Activated B cell treated with CpG ODN at 0.5 μM for 24 hours (primary cell): ENCODE measurements at regions of chr19 and their contacts with region 1.

Region 1: GRCh38 chr19:14031719-14032480 is at the start of gene IL27RA:
- DNase-seq: peak; percentile 70
- ATAC-seq: peak; percentile 74
- H3K4me3 Mint-ChIP-seq: peak within 1 kb of the TSS; percentile 91
- H3K27ac Mint-ChIP-seq: peak within 1 kb of the TSS; percentile 89
- H3K4me1 Mint-ChIP-seq: peaks cover 34% of the 10 kb centered on the region
- H3K27me3 Mint-ChIP-seq: no peaks in the 10 kb centered on the region
- CTCF ChIP-seq: no peak
- total RNA-seq, gene IL27RA: 34.5 and 34.6 TPM in 2 replicates

Region 2: GRCh38 chr19:13905938-13906904 is 125.7 kb before region 1 on chr19 and contains the starts of genes BRME1 and CC2D1A:
- CTCF ChIA-PET with region 1: interaction called, 11 read pairs
- POLR2A ChIA-PET with region 1: interaction called, 11 read pairs
- intact Hi-C with region 1: loop called (anchors 1 kb)
- DNase-seq: peak; percentile 93
- ATAC-seq: peak; percentile 99
- H3K4me3 Mint-ChIP-seq: peak within 1 kb of the TSS; percentile 87
- H3K27ac Mint-ChIP-seq: peak within 1 kb of the TSS; percentile 78
- H3K4me1 Mint-ChIP-seq: peaks cover 11% of the 10 kb centered on the region
- H3K27me3 Mint-ChIP-seq: no peaks in the 10 kb centered on the region
- CTCF ChIP-seq: no peak
- total RNA-seq, gene BRME1: 1.2 and 2.0 TPM in 2 replicates
- total RNA-seq, gene CC2D1A: 32.4 and 35.6 TPM in 2 replicates

Region 3: DNA sequence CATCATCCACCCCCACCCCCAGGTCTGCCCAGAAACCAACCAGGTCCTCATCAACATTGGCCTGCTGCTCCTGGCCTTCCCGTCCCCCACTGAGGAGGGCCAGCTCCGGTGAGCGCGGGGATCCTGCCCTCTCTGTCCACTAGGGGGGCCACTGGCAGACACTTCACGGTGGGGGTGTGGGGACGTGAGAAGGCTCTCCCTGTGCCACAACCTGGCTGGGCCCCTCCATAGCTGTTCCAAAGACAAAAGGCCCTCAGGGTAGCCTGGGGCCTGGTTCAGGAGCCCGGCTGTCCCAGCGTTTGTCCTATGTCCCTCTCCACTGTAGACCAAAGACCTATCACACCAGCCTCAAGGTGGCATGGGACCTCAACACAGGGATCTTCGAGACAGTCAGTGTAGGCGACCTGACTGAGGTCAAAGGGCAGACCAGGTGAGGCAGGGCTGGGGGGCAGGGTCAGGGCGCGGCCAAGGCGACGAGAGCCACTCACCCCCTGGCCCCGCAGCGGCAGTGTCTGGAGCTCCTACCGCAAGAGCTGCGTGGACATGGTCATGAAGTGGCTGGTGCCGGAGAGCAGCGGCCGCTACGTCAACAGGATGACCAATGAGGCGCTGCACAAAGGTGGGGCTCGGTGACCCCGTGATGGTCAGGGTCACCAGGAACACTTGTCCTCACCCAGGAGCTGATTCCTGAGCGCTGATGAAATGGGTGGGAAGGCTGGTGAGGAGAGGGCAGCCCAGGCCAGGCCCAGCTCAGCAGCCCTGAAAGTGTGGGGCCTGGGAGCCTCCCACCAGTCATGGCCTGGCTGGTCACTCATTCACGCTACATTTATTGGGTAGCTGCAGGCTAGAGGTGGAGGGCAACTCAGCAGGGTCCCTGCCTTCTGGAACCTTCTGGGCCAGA is 71.7 kb before region 1 on chr19:
- CTCF ChIA-PET with region 1: interaction called, 8 read pairs
- POLR2A ChIA-PET with region 1: interaction called, 3 read pairs
- intact Hi-C with region 1: loop called (anchors 2 kb)
- DNase-seq: no peak
- ATAC-seq: peak; percentile 57
- H3K4me3 Mint-ChIP-seq: no peak overlapping the region
- H3K27ac Mint-ChIP-seq: no peak overlapping the region
- H3K4me1 Mint-ChIP-seq: no peaks in the 10 kb centered on the region
- H3K27me3 Mint-ChIP-seq: no peaks in the 10 kb centered on the region
- CTCF ChIP-seq: no peak

Region 4: DNA sequence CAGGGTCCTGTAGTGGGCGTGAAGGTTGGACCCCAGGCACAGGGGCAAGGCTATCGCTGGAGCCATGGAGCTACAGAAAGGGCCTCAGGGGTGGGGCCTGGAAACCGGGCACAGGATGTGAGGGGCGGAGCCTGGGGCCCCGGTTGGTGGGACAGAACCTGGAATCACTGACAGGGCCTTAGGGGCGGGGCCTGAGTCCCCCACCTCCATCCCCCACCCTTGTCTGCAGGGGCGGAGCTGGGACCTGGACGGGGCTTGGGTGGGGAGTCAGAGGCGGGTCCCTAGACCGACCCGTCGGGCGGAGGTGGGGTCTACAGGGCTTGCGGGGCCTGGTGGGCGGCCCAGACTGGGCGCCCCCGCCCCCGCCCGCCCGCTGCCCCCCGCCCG is 53.6 kb before region 1 on chr19:
- CTCF ChIA-PET with region 1: interaction called, 4 read pairs
- POLR2A ChIA-PET with region 1: interaction called, 22 read pairs
- intact Hi-C with region 1: no loop called
- DNase-seq: no peak
- ATAC-seq: peak; percentile 36
- H3K4me3 Mint-ChIP-seq: peak overlapping the region; percentile 50
- H3K27ac Mint-ChIP-seq: no peak overlapping the region
- H3K4me1 Mint-ChIP-seq: peaks cover 42% of the 10 kb centered on the region
- H3K27me3 Mint-ChIP-seq: no peaks in the 10 kb centered on the region
- CTCF ChIP-seq: no peak

Region 5: GRCh38 chr19:13986348-13986904 is 45.5 kb before region 1 on chr19:
- CTCF ChIA-PET with region 1: interaction called, 5 read pairs
- POLR2A ChIA-PET with region 1: interaction called, 52 read pairs
- intact Hi-C with region 1: loop called (anchors 1 kb)
- DNase-seq: peak; percentile 94
- ATAC-seq: peak; percentile 83
- H3K4me3 Mint-ChIP-seq: peak overlapping the region; percentile 60
- H3K27ac Mint-ChIP-seq: peak overlapping the region; percentile 97
- H3K4me1 Mint-ChIP-seq: peaks cover 78% of the 10 kb centered on the region
- H3K27me3 Mint-ChIP-seq: no peaks in the 10 kb centered on the region
- CTCF ChIP-seq: no peak

Region 6: GRCh38 chr19:14015524-14016035 is 16.3 kb before region 1 on chr19:
- CTCF ChIA-PET with region 1: interaction called, 3 read pairs
- POLR2A ChIA-PET with region 1: interaction called, 33 read pairs
- intact Hi-C with region 1: loop called (anchors 2 kb)
- DNase-seq: no peak
- ATAC-seq: peak; percentile 76
- H3K4me3 Mint-ChIP-seq: peak overlapping the region; percentile 46
- H3K27ac Mint-ChIP-seq: peak overlapping the region; percentile 79
- H3K4me1 Mint-ChIP-seq: peaks cover 42% of the 10 kb centered on the region
- H3K27me3 Mint-ChIP-seq: no peaks in the 10 kb centered on the region
- CTCF ChIP-seq: no peak

Region 7: GRCh38 chr19:14073261-14073924 is 41.5 kb after region 1 on chr19:
- CTCF ChIA-PET with region 1: interaction called, 7 read pairs
- POLR2A ChIA-PET with region 1: interaction called, 11 read pairs
- intact Hi-C with region 1: no loop called
- DNase-seq: peak; percentile 88
- ATAC-seq: peak; percentile 66
- H3K4me3 Mint-ChIP-seq: peak overlapping the region; percentile 86
- H3K27ac Mint-ChIP-seq: no peak overlapping the region
- H3K4me1 Mint-ChIP-seq: peaks cover 19% of the 10 kb centered on the region
- H3K27me3 Mint-ChIP-seq: no peaks in the 10 kb centered on the region
- CTCF ChIP-seq: no peak